ENCODE measurements at regions of chr3 and their contacts with region 1.

Region 1: GRCh38 chr3:14178247-14179113 is at the starts of genes LSM3 and XPC:
- DNase-seq: peak; percentile 98
- H3K4me3 Mint-ChIP-seq: peak within 1 kb of the TSS; percentile 87
- H3K27ac Mint-ChIP-seq: peak within 1 kb of the TSS; percentile 89
- H3K4me1 Mint-ChIP-seq: peaks cover 63% of the 10 kb centered on the region
- H3K27me3 Mint-ChIP-seq: no peaks in the 10 kb centered on the region
- total RNA-seq, gene LSM3: 22.1 to 22.9 TPM
- total RNA-seq, gene XPC: 27.8 to 31.6 TPM

Region 2: DNA sequence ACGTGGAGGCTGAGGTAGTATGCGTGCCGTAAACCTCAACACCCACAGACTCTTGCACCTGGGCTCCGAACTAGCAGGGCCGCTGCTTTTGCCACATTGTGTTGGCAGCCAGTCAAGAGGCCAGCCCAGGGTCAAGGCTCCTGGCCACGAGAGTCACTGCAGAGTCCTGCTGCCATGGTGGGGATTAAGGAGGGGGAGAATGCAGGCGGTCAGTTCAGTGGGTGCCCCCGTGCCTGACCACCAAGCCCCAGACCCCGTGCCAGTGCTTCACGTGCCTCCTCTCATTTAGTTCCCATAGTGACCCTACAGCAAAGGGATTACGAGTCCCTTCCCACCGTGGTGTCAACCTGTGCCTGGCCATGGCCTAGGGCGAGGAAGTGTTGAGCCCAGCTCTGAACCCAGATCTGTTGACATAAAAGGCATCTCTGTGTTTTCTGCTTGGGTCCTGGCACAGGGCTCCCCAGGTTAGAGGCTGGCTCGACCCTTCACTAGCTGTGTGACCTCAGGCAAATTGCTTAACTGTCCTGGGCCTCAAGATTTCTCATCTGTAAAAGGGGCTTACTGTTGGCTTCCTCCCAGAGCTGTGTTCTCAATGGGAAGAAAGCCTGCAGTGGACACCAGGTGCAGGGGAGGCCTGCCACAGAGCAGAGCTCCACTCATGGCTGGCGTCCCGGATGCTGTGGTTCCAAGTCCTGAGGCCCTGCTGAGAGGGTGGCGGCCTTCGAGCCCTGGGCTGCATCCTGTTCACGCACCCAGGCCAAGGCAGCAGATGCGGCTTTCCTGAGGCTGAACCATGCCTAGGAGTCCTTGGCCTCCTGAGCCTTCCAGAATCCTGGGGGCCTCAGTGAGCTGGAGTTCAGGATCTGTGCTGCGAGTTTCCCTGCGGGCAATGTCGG is 596.7 kb before region 1 on chr3:
- CTCF ChIA-PET with region 1: no interaction called
- POLR2A ChIA-PET with region 1: no interaction called
- intact Hi-C with region 1: no loop called
- DNase-seq: no peak
- H3K4me3 Mint-ChIP-seq: no peak overlapping the region
- H3K27ac Mint-ChIP-seq: no peak overlapping the region
- H3K4me1 Mint-ChIP-seq: no peaks in the 10 kb centered on the region
- H3K27me3 Mint-ChIP-seq: no peaks in the 10 kb centered on the region

Region 3: DNA sequence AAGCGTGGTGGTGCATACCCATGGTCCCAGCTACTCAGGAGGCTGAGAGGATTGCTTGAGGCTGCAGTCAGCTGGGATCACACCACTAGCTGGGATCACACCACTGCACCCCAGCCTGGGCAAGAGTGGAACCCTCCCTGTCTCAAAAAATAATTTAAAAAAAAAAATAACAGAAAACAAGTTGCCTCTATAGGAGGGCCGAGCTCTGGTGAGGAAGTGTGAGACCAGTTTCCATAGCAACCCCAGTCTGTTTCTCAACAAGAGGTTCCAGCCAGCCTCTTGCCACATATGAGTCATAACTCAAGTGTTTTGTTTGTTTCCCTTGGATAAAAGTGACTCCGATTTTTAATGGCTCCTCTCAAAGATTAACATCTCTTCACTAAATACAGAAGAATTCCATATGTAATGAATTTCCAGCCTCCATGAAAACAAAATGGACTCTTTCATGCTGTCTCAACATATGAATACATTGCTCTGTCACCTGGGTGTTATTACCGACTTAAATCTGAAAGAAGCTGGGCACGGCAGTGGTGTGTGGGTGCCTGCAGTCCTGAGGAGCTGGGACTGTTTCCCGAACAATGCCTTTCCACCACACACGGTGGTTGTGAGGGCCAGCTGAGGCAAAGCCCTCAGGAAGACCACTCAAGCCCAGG is 33.9 kb before region 1 on chr3:
- CTCF ChIA-PET with region 1: interaction called, 3 read pairs
- POLR2A ChIA-PET with region 1: interaction called, 20 read pairs
- intact Hi-C with region 1: loop called (anchors 1 kb)
- DNase-seq: peak; percentile 74
- H3K4me3 Mint-ChIP-seq: peak overlapping the region; percentile 1
- H3K27ac Mint-ChIP-seq: peak overlapping the region; percentile 79
- H3K4me1 Mint-ChIP-seq: peaks cover 57% of the 10 kb centered on the region
- H3K27me3 Mint-ChIP-seq: no peaks in the 10 kb centered on the region

Region 4: GRCh38 chr3:14234251-14235002 is 55.9 kb after region 1 on chr3:
- CTCF ChIA-PET with region 1: no interaction called
- POLR2A ChIA-PET with region 1: no interaction called
- intact Hi-C with region 1: no loop called
- DNase-seq: no peak
- H3K4me3 Mint-ChIP-seq: no peak overlapping the region
- H3K27ac Mint-ChIP-seq: no peak overlapping the region
- H3K4me1 Mint-ChIP-seq: peaks cover 7% of the 10 kb centered on the region
- H3K27me3 Mint-ChIP-seq: peaks cover 34% of the 10 kb centered on the region

Region 5: GRCh38 chr3:14651440-14652251 is 473.2 kb after region 1 on chr3 and contains the start of gene CCDC174:
- CTCF ChIA-PET with region 1: no interaction called
- POLR2A ChIA-PET with region 1: interaction called, 11 read pairs
- intact Hi-C with region 1: loop called (anchors 1 kb)
- DNase-seq: peak; percentile 97
- H3K4me3 Mint-ChIP-seq: peak within 1 kb of the TSS; percentile 89
- H3K27ac Mint-ChIP-seq: peak within 1 kb of the TSS; percentile 98
- H3K4me1 Mint-ChIP-seq: peaks cover 35% of the 10 kb centered on the region
- H3K27me3 Mint-ChIP-seq: no peaks in the 10 kb centered on the region
- total RNA-seq, gene CCDC174: 16.6 to 18.6 TPM